ENCODE measurements at regions of chr19 and their contacts with region 1.

Region 1: GRCh38 chr19:925526-926322 is at the start of gene ARID3A:
- DNase-seq: peak; percentile 81
- H3K4me3 Mint-ChIP-seq: peak within 1 kb of the TSS; percentile 73
- H3K27ac Mint-ChIP-seq: peak within 1 kb of the TSS; percentile 27
- H3K4me1 Mint-ChIP-seq: no peaks in the 10 kb centered on the region
- H3K27me3 Mint-ChIP-seq: no peaks in the 10 kb centered on the region
- CTCF ChIP-seq: no peak
- total RNA-seq, gene ARID3A: 10.2 and 13.1 TPM in 2 replicates

Region 2: DNA sequence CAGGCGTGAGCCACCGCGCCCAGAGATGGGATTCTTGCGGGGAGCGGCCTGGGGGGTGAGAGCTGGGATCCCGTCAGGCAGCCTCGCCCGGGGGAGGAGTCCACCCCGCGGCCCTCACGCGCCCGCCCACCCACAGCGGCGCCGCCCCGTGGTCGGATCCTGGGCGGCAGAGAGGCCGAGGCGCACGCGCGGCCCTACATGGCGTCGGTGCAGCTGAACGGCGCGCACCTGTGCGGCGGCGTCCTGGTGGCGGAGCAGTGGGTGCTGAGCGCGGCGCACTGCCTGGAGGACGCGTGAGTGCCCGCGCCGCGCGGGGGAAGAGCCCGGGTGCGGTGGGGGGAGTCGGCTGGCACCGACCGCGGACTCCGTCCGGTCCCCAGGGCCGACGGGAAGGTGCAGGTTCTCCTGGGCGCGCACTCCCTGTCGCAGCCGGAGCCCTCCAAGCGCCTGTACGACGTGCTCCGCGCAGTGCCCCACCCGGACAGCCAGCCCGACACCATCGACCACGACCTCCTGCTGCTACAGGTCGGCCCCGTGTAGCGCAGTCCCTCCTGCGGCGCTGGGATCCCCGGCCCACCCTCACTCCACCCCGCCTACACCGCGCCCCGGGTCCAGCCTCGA is 65.1 kb before region 1 on chr19:
- CTCF ChIA-PET with region 1: interaction called, 5 read pairs
- POLR2A ChIA-PET with region 1: no interaction called
- intact Hi-C with region 1: loop called (anchors 1 kb)
- DNase-seq: peak; percentile 45
- H3K4me3 Mint-ChIP-seq: no peak overlapping the region
- H3K27ac Mint-ChIP-seq: no peak overlapping the region
- H3K4me1 Mint-ChIP-seq: peaks cover 5% of the 10 kb centered on the region
- H3K27me3 Mint-ChIP-seq: no peaks in the 10 kb centered on the region
- CTCF ChIP-seq: no peak

Region 3: DNA sequence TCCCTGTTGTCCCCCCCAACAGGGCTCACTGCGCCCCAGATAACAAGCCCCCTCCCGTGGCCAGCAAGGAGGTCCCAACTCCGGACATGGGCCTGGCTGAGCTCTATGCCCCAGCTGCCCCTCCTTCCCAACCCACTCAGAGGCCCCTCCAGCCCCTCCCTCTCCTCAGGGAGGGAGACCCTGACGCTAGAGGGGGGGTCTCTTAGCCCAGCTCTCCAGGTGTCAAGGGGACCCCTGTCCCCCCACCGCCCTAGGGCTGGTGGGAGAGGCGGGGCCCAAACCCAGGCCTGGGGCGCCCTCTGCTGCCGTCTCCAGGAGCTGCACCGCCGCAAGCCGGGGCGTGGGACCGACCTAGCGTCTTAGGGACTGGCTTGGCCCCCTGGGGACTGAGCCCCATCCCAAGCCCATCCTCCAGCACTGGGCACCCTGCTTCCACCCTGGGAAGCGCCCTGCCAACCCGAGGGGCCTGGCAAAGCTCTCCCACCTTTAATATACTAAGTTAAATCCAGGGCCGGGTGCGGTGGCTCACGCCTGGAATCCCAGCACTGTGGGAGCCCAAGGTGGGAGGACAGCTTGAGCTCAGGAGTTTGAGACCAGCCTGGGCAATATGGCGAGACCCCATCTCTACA is 75.9 kb after region 1 on chr19:
- CTCF ChIA-PET with region 1: no interaction called
- POLR2A ChIA-PET with region 1: interaction called, 3 read pairs
- intact Hi-C with region 1: loop called (anchors 1 kb)
- DNase-seq: peak; percentile 51
- H3K4me3 Mint-ChIP-seq: no peak overlapping the region
- H3K27ac Mint-ChIP-seq: no peak overlapping the region
- H3K4me1 Mint-ChIP-seq: no peaks in the 10 kb centered on the region
- H3K27me3 Mint-ChIP-seq: peaks cover 17% of the 10 kb centered on the region
- CTCF ChIP-seq: peak; percentile 95